ENCODE measurements at regions of chr5 and their contacts with region 1.

Region 1: DNA sequence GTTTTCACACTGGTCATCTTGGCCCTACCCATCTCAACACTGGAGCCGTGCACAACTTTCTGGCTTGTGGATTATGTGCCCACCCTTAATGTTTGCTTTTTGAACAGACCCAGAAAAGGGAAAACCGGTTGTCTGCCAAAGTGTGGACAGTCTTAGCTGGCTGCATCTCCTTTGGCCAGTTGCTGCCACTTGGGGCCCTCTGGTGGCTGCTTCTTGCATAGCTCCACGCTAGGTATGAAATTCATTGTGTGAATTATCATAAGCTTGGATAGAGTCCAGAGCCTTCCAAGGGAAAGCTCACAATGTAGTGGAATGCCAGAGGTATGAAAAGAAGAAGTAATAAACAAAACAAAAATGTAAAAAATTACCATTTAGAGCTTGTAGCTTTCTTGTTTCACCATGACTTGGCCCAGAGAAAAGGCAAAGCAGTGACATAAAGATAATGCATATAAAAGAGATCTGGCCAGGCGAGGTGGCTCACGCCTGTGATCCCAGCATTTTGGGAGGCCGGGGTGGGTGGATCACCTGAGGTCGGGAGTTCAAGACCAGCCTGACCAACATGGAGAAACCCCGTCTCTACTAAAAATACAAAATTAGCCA is 12.5 kb upstream of the SLC36A3 start:
- DNase-seq: peak; percentile 76
- H3K4me3 Mint-ChIP-seq: no peak overlapping the region
- H3K27ac Mint-ChIP-seq: no peak overlapping the region
- H3K4me1 Mint-ChIP-seq: no peaks in the 10 kb centered on the region
- H3K27me3 Mint-ChIP-seq: peaks cover 2% of the 10 kb centered on the region

Region 2: GRCh38 chr5:151093476-151093889 is 222.6 kb before region 1 on chr5:
- CTCF ChIA-PET with region 1: no interaction called
- POLR2A ChIA-PET with region 1: no interaction called
- intact Hi-C with region 1: no loop called
- DNase-seq: no peak
- H3K4me3 Mint-ChIP-seq: peak overlapping the region; percentile 65
- H3K27ac Mint-ChIP-seq: peak overlapping the region; percentile 92
- H3K4me1 Mint-ChIP-seq: peaks cover 64% of the 10 kb centered on the region
- H3K27me3 Mint-ChIP-seq: no peaks in the 10 kb centered on the region

Region 3: GRCh38 chr5:151284392-151284967 is 31.6 kb before region 1 on chr5:
- CTCF ChIA-PET with region 1: interaction called, 8 read pairs
- POLR2A ChIA-PET with region 1: no interaction called
- intact Hi-C with region 1: loop called (anchors 1 kb)
- DNase-seq: peak; percentile 32
- H3K4me3 Mint-ChIP-seq: no peak overlapping the region
- H3K27ac Mint-ChIP-seq: no peak overlapping the region
- H3K4me1 Mint-ChIP-seq: no peaks in the 10 kb centered on the region
- H3K27me3 Mint-ChIP-seq: peaks cover 7% of the 10 kb centered on the region

Measured in activated CD4-positive, alpha-beta memory T cell treated with anti-CD3 and anti-CD28 coated beads for 36 hours (primary cell).